Posterior cingulate gyrus (tissue), 11 donors: ENCODE measurements at regions of chr10 and their contacts with region 1.

Region 1: GRCh38 chr10:114297136-114297705 is 58.2 kb downstream of the VWA2 start:
- DNase-seq: no peak

Region 2: DNA sequence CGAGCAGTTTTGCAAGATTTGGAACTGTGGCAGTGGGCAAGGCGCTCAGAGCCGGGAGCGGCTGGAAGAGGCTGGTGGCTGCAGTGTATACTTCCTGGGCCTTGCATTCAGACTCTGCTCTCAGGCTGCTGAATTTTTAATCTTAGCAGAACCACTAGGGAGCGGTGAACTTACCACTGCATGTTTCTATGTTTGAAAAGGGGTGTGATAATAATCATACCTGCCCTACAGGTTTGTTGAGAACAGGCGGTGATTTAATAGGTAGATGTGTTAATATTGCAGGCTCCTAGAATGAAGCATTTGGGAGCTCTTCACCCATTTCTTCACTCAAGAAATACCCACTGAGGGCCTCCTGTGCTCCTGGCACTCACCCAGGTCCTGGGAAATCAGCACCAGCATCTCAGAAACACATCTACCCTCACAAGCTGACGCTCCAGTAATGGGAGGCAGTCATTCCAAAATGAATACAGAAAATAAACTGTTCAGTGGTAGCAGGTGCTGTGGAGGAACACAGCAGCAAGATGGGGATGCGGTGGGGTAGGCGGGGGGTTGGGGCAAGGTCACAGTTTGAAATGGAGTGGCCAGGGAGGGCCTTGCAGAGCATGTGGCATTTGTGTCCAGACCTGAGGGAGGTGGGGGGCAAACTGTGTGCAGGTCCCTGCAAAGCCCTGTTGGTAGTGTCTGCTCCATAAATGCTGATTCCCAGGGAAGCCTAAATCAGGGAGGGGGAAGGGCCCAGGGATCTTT is 17.1 kb before region 1 on chr10:
- intact Hi-C with region 1: no loop called
- DNase-seq: no peak

Region 3: GRCh38 chr10:114437456-114438292 is 140.5 kb after region 1 on chr10:
- intact Hi-C with region 1: loop called (anchors 5 kb)
- DNase-seq: no peak

Region 4: DNA sequence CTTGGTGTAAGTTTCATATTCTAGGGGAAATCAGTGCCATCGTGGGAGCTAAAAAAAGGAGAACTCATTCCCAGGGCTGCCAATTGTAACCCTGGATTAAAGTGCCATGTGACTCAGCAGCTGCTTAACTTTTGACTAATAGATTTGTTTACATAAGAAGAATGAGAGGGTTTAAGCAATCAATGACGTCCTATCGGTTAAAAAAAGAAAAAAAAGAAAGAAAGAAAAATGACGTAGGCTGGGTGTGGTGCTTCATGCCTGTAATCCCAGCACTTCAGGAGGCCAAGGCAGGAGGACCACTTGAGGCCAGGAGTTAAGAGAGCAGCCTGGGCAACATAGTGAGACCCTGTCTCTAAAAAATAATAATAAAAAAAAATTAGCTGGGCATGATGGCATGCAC is 223.2 kb after region 1 on chr10:
- intact Hi-C with region 1: no loop called
- DNase-seq: no peak